Naive thymus-derived CD8-positive, alpha-beta T cell (primary cell): ENCODE measurements at regions of chr1 and their contacts with region 1.

Region 1: GRCh38 chr1:32240140-32240951 is 6.7 kb upstream of the FAM167B start:
- DNase-seq: peak; percentile 57 to 84 (median 64)
- ATAC-seq: peak; percentile 81
- H3K4me3 Mint-ChIP-seq: peak overlapping the region; percentile 88 to 93 (median 90)
- H3K27ac Mint-ChIP-seq: peak overlapping the region; percentile 69 to 91 (median 84)
- H3K4me1 Mint-ChIP-seq: peaks cover 7 to 21% (median 20%) of the 10 kb centered on the region in 4 donors
- H3K27me3 Mint-ChIP-seq: no peaks in the 10 kb centered on the region

Region 2: GRCh38 chr1:31705080-31705866 is 535.1 kb before region 1 on chr1:
- POLR2A ChIA-PET with region 1: no interaction called
- DNase-seq: peak in 9 of 10 donors; percentile 26 to 55 (median 35)
- ATAC-seq: peak; percentile 78 to 85
- H3K4me3 Mint-ChIP-seq: peak overlapping the region in 7 of 10 donors; percentile 13 to 71 (median 50)
- H3K27ac Mint-ChIP-seq: no peak overlapping the region
- H3K4me1 Mint-ChIP-seq: peaks cover 28 to 49% (median 39%) of the 10 kb centered on the region in 4 donors
- H3K27me3 Mint-ChIP-seq: peaks cover 35 to 64% (median 54%) of the 10 kb centered on the region in 5 donors

Region 3: DNA sequence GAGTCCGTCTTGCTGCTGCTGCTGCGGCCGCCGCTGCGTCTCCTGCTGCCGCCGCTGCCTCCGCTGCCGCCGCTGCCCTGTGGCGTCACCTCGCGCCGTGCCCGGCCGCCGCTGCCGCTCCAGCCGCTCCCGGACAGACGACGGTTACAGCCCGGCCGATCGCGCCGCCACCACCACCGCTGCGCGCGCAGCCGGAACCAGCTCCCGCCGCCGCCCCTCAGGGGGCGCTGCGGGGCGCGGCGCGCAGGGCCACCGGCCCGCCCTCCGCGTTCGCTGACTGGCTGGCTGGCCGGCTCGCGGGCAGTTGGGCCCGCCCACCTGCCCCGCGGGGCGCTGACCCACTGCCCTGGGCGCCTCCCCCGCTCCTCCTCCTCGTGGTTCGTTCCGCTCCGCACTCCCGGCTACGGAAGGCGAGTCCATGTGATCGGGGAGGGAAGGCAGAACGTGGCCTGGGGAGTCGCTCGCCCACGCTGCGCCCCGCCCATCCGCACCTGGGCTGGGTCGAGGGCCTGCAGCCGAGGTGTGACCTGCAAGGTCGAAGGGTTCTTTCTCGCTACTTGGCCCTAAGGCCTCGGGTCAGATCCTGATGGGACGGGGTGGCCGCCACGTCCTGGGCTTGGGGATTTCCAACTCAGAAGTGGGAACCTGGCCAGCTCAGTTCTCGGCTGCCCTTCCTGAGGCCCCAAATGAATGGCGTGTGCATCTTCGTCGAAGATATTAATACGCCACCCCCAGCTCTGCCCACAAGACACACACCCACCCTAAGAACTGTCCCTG is 302.0 kb before region 1 on chr1 and contains the start of gene PTP4A2:
- POLR2A ChIA-PET with region 1: no interaction called
- DNase-seq: peak; percentile 56 to 90 (median 82)
- ATAC-seq: peak; percentile 57 to 70
- H3K4me3 Mint-ChIP-seq: peak within 1 kb of the TSS; percentile 90 to 100 (median 96)
- H3K27ac Mint-ChIP-seq: peak within 1 kb of the TSS; percentile 94 to 99 (median 97)
- H3K4me1 Mint-ChIP-seq: peaks cover 31 to 84% (median 73%) of the 10 kb centered on the region in 4 donors
- H3K27me3 Mint-ChIP-seq: no peaks in the 10 kb centered on the region
- polyA plus RNA-seq, gene PTP4A2: 287 to 748 (median 546) TPM

Region 4: GRCh38 chr1:32215629-32216480 is 24.5 kb before region 1 on chr1:
- POLR2A ChIA-PET with region 1: interaction called, 16 read pairs
- DNase-seq: peak; percentile 34 to 76 (median 46)
- ATAC-seq: peak; percentile 90 to 92
- H3K4me3 Mint-ChIP-seq: no peak overlapping the region
- H3K27ac Mint-ChIP-seq: peak overlapping the region in 6 of 10 donors; percentile 22 to 80 (median 55)
- H3K4me1 Mint-ChIP-seq: peaks cover 7 to 22% (median 16%) of the 10 kb centered on the region in 4 donors
- H3K27me3 Mint-ChIP-seq: no peaks in the 10 kb centered on the region

Region 5: DNA sequence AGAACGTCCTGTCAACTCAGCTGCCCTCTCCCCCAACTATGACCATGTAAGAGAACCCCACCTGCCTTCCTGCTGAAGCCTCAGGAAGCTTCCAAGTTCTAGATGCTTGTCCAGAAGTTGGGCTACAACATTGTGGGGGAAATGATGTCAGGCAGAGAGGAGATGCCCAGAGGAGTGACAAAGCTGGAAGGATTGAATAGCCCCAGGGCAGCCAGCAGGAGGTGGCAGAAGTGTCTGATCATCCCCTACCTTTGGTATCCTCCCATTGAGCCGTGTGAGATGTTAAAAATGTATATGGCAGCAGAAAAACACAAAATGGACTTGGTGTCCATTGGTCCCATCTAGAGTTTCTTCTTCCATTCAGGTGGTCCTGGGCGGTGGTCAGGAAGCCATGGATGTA is 11.6 kb before region 1 on chr1:
- POLR2A ChIA-PET with region 1: interaction called, 12 read pairs
- DNase-seq: no peak
- ATAC-seq: no peak
- H3K4me3 Mint-ChIP-seq: no peak overlapping the region
- H3K27ac Mint-ChIP-seq: peak overlapping the region in 5 of 10 donors; percentile 28 to 60 (median 41)
- H3K4me1 Mint-ChIP-seq: peaks cover 10 to 22% (median 17%) of the 10 kb centered on the region in 4 donors
- H3K27me3 Mint-ChIP-seq: no peaks in the 10 kb centered on the region